ENCODE measurements at regions of chr9 and their contacts with region 1.

Region 1: DNA sequence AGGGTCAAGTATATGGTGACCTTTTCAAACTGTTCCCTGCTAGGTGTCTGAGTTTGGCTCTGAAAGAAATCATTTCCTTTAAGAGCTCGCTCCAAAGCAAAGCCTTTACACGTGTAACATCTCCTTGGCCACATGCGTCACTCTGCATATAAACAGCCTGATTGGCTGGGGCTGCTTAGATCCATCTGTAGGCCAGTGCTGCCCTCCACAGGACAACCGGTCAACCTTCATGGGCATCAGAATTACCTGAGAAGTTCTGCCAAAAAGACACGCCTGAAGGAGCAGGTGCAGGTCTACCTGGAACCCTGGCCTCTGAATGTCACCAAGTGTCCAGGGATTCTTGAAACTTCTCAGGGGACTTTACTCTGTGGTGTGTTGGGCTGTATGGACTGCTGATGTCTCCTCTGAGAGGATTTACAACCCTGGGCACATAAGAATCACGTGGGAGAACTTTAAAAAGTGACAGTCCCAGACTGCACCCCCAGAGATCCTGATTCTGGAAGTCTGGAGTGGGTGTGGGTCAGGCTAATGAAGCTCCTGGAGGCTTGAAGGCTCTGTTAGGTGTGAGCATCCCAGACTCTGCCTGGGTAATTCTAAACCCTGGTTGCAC is 497.6 kb downstream of the GADD45G start:
- DNase-seq: peak; percentile 79 to 92 (median 88)
- ATAC-seq: peak; percentile 93 to 95 (median 94)
- H3K4me3 ChIP-seq: no peak overlapping the region
- H3K27ac ChIP-seq: no peak overlapping the region
- H3K4me1 ChIP-seq: peaks cover 2 to 9% (median 7%) of the 10 kb centered on the region in 3 donors
- H3K27me3 ChIP-seq: no peaks in the 10 kb centered on the region
- CTCF ChIP-seq: peak; percentile 61 to 67 (median 64)

Region 2: DNA sequence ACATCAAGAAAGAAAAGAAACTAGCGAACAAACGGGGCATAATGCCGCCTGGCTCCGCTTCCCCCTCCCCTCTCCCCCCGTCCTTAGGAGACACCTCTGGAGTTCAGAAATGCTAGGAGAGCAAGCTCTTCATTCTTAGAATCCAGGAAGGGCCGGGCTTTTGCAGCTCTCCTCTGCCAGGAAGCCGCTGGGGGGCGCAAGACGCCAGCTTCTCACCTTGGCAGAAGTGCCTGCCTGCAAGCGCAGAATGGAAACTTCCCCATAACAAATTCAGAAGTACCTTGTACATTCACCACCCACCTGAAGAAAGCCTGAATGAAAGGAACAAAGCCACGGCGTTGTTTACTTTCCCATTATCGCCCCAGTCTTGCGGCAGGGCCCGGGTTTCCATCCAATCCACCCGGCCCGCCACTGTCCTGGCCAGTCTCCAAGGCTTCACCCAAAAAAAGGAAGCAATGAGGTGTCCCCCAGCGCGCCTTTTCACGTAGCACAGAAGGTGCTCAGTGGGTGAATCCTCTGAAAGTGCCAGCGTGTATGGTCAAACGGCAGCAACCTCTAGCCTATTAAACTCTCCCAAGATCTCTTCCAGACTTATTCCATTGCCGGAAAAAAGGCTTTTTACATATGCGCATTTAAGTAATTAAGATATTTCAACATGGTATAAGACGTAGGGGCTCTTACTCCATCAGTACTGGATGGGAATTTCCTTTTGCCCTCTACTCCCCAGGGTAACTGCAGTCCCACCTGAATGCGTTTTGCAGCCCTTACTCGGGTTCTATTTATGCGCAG is 499.2 kb before region 1 on chr9:
- intact Hi-C with region 1: loop called in 2 of 3 experiments (anchors 2 to 5 kb)
- DNase-seq: peak; percentile 88 to 97 (median 93)
- ATAC-seq: peak; percentile 33 to 68 (median 56)
- H3K4me3 ChIP-seq: peak overlapping the region; percentile 18 to 97 (median 54)
- H3K27ac ChIP-seq: peak overlapping the region in 3 of 4 donors; percentile 44 to 73 (median 68)
- H3K4me1 ChIP-seq: peaks cover 5 to 16% (median 15%) of the 10 kb centered on the region in 3 donors
- H3K27me3 ChIP-seq: no peaks in the 10 kb centered on the region
- CTCF ChIP-seq: peak; percentile 68 to 76 (median 72)

Region 3: DNA sequence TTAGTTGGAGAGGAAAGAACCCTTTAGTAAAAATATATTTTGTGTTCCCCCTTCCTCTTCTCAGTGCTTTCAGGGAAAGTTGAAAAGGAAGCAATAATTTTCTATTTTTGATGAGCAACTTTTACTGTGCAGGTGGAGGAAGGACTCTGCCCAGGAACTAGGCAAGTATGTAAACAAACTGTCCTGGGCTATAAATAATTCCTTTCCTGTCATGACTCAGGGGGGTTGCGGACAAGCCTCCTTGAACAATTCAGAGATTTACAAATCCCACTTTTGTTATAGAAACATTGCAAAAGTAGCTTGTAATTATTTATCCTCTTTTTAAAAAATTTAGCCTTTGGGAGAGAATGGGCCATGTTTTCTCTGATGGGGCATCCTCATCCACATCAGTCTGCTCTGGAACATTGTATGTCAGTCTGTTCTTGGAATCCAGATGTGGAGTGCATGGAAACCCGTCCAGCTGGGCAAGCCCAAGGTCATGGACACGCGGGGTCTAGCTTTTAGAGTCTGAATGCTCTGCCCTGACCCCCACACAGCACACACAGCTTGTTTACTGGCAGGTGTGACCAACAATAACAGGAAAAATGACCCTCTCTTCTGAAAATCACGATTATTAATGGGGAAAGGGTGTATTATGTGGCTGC is 370.0 kb before region 1 on chr9:
- intact Hi-C with region 1: loop called in 1 of 3 experiments (anchors 10 kb)
- DNase-seq: no peak
- ATAC-seq: peak; percentile 36 to 75 (median 48)
- H3K4me3 ChIP-seq: no peak overlapping the region
- H3K27ac ChIP-seq: peak overlapping the region; percentile 0 to 67 (median 23)
- H3K4me1 ChIP-seq: peaks cover 23 to 27% (median 27%) of the 10 kb centered on the region in 3 donors
- H3K27me3 ChIP-seq: no peaks in the 10 kb centered on the region
- CTCF ChIP-seq: no peak

Region 4: GRCh38 chr9:89929673-89930480 is 172.5 kb before region 1 on chr9:
- intact Hi-C with region 1: loop called in 1 of 3 experiments (anchors 10 kb)
- DNase-seq: no peak
- ATAC-seq: peak in 3 of 4 donors; percentile 45 to 52 (median 51)
- H3K4me3 ChIP-seq: no peak overlapping the region
- H3K27ac ChIP-seq: no peak overlapping the region
- H3K4me1 ChIP-seq: peaks cover 0 to 12% (median 11%) of the 10 kb centered on the region in 3 donors
- H3K27me3 ChIP-seq: no peaks in the 10 kb centered on the region
- CTCF ChIP-seq: no peak

Region 5: DNA sequence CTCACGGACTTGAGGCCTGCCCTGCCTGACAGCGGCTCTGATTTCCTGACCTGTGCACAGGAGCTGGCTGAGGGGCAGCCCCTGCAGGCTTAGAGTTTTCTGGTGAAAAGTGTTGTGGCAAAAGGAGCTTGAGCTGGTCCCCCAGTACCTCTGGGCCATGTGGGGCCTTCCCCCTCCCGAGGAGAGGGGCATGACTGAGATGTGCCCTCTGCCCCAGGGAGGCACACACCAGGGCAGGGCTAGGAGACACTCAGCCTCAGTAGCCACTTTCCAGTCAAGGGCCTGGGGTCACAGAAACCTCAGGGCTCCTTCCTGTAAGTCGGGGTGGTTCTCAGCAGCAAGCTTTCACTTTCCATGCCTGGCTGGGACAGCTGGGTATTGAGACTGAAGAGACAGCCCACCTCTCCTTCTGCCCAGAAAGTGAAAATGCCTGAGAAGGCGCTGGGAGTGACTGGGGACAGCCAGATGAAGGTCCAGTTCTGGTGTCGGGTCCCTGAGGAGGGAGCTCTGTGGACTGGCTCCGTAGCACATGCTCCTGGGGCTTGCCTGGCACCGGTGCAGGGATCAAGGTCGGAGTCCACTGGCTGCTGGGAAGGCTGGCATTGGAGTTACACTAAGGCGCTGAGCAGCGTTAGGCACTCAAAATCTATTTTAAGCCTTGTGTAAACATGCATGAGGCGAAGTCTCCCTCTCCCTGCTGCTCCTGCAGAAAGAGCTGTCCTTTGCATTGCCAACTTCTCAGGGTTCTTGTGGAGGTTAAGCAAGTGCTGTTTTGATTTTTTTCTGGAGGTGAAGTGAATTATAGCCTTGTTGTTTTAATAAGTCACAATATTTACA is 102.6 kb before region 1 on chr9:
- intact Hi-C with region 1: loop called in 1 of 3 experiments (anchors 10 kb)
- DNase-seq: peak; percentile 81 to 95 (median 88)
- ATAC-seq: peak; percentile 91 to 94 (median 92)
- H3K4me3 ChIP-seq: peak overlapping the region in 1 of 4 donors; percentile 21
- H3K27ac ChIP-seq: peak overlapping the region; percentile 85 to 97 (median 90)
- H3K4me1 ChIP-seq: peaks cover 22 to 47% (median 41%) of the 10 kb centered on the region in 3 donors
- H3K27me3 ChIP-seq: no peaks in the 10 kb centered on the region
- CTCF ChIP-seq: no peak

Region 6: GRCh38 chr9:90038763-90039162 is 63.6 kb before region 1 on chr9:
- intact Hi-C with region 1: loop called in 1 of 3 experiments (anchors 10 kb)
- DNase-seq: no peak
- ATAC-seq: peak in 2 of 4 donors; percentile 38 to 55
- H3K4me3 ChIP-seq: no peak overlapping the region
- H3K27ac ChIP-seq: no peak overlapping the region
- H3K4me1 ChIP-seq: no peaks in the 10 kb centered on the region
- H3K27me3 ChIP-seq: no peaks in the 10 kb centered on the region
- CTCF ChIP-seq: no peak